ENCODE measurements at regions of chr6 and their contacts with region 1.

Region 1: GRCh38 chr6:15441215-15441868 is 195.5 kb downstream of the JARID2 start:
- DNase-seq: no peak
- ATAC-seq: peak; percentile 71
- H3K4me3 Mint-ChIP-seq: no peak overlapping the region
- H3K27ac Mint-ChIP-seq: peak overlapping the region; percentile 5
- H3K4me1 Mint-ChIP-seq: peaks cover 67% of the 10 kb centered on the region
- H3K27me3 Mint-ChIP-seq: no peaks in the 10 kb centered on the region
- CTCF ChIP-seq: no peak

Region 2: DNA sequence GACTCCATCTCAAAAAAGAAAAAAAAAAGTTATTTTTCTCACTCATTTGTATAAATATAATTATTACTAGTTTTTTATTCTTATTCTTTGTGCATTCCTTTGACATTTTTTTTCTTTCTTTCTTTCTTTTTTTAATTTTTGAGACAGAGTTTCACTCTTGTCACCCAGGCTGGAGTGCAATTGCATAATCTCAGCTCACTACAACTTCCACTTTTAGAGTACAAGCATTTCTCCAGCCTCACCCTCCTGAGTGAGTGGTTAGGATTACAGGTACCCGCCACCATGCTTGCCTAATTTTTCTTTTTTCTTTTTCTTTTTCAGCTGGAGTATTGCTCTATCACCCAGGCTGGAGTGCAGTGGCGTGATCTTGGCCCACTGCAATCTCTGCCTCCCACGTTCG is 246.9 kb before region 1 on chr6:
- CTCF ChIA-PET with region 1: no interaction called
- POLR2A ChIA-PET with region 1: no interaction called
- intact Hi-C with region 1: no loop called
- DNase-seq: no peak
- ATAC-seq: no peak
- H3K4me3 Mint-ChIP-seq: no peak overlapping the region
- H3K27ac Mint-ChIP-seq: no peak overlapping the region
- H3K4me1 Mint-ChIP-seq: no peaks in the 10 kb centered on the region
- H3K27me3 Mint-ChIP-seq: peaks cover 2% of the 10 kb centered on the region
- CTCF ChIP-seq: no peak

Region 3: GRCh38 chr6:15399641-15400470 is 41.5 kb before region 1 on chr6:
- CTCF ChIA-PET with region 1: no interaction called
- POLR2A ChIA-PET with region 1: no interaction called
- intact Hi-C with region 1: loop called (anchors 5 kb)
- DNase-seq: no peak
- ATAC-seq: no peak
- H3K4me3 Mint-ChIP-seq: peak overlapping the region; percentile 16
- H3K27ac Mint-ChIP-seq: peak overlapping the region; percentile 50
- H3K4me1 Mint-ChIP-seq: peaks cover 77% of the 10 kb centered on the region
- H3K27me3 Mint-ChIP-seq: no peaks in the 10 kb centered on the region
- CTCF ChIP-seq: no peak

Region 4: GRCh38 chr6:15512126-15512525 is 70.8 kb after region 1 on chr6:
- CTCF ChIA-PET with region 1: no interaction called
- POLR2A ChIA-PET with region 1: no interaction called
- intact Hi-C with region 1: no loop called
- DNase-seq: no peak
- ATAC-seq: no peak
- H3K4me3 Mint-ChIP-seq: no peak overlapping the region
- H3K27ac Mint-ChIP-seq: no peak overlapping the region
- H3K4me1 Mint-ChIP-seq: no peaks in the 10 kb centered on the region
- H3K27me3 Mint-ChIP-seq: no peaks in the 10 kb centered on the region
- CTCF ChIP-seq: no peak

Region 5: DNA sequence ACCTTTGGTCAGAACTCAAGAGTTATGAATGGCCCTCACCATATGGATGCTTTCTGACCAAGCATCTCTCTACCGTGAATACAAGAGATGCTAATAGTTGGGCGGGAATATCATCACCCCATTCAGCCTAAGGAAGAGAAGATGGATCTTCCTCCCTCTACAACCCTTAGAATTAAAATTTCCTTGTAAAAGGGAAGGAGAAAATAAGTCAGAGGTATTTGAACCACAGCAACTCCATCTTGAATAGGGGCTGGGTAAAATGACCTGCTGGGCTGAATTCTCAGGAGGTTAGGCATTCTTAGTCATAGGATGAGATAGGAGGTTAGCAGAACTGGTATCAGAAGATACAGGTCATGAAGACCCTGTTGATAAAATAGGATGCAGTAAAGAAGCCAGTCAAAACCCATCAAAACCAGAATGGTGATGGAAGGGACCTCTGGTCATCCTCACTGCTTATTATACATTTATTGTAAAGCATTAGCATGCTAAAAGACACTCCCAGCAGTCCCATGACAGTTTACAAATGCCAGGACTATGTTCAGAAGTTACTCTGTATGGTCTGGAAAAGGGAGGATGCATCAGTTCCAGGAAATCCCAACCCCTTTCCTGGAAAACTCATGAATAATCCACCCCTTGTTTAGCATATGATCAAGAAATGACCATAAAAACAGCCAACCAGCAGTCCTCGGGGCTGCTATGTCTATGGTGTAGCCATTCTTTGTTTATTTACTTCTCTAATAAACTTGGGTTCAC is 120.3 kb after region 1 on chr6:
- CTCF ChIA-PET with region 1: no interaction called
- POLR2A ChIA-PET with region 1: no interaction called
- intact Hi-C with region 1: no loop called
- DNase-seq: no peak
- ATAC-seq: no peak
- H3K4me3 Mint-ChIP-seq: no peak overlapping the region
- H3K27ac Mint-ChIP-seq: no peak overlapping the region
- H3K4me1 Mint-ChIP-seq: peaks cover 45% of the 10 kb centered on the region
- H3K27me3 Mint-ChIP-seq: no peaks in the 10 kb centered on the region
- CTCF ChIP-seq: no peak

Region 6: GRCh38 chr6:16319813-16320532 is 878.6 kb after region 1 on chr6:
- CTCF ChIA-PET with region 1: no interaction called
- POLR2A ChIA-PET with region 1: no interaction called
- intact Hi-C with region 1: no loop called
- DNase-seq: no peak
- ATAC-seq: peak; percentile 67
- H3K4me3 Mint-ChIP-seq: peak overlapping the region; percentile 9
- H3K27ac Mint-ChIP-seq: peak overlapping the region; percentile 13
- H3K4me1 Mint-ChIP-seq: peaks cover 44% of the 10 kb centered on the region
- H3K27me3 Mint-ChIP-seq: no peaks in the 10 kb centered on the region
- CTCF ChIP-seq: no peak

Measured in activated B cell treated with CpG ODN at 0.5 μM for 24 hours (primary cell).